ENCODE measurements at regions of chr12 and their contacts with region 1.

Region 1: GRCh38 chr12:118377884-118378470 is 1.6 kb downstream of the SUDS3 start:
- DNase-seq: peak; percentile 86
- ATAC-seq: peak; percentile 5
- H3K4me3 ChIP-seq: peak overlapping the region; percentile 84
- H3K27ac ChIP-seq: no peak overlapping the region
- H3K4me1 ChIP-seq: peaks cover 21% of the 10 kb centered on the region
- H3K27me3 ChIP-seq: no peaks in the 10 kb centered on the region
- CTCF ChIP-seq: peak; percentile 98

Region 2: DNA sequence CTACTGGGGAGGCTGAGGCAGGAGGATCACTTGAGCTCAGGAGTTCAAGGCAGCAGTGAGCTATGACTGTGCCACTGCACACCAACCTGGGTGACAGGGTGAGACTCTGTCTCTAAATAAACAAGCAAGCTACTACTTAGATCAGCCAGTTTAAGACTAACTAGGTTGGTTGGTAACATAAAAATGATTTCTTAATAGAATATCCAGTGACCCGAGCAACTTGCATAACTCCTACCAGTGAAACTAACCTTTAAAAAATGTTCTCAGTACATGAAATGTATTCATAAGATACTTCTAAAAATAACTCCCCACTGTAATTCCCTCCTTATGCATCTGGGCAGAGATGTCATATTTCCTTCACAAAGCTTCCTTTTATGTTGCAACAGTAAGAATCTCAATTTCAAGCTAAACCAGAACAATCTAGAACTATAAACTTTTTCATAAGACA is 21.1 kb before region 1 on chr12:
- CTCF ChIA-PET with region 1: interaction called, 11 read pairs
- POLR2A ChIA-PET with region 1: no interaction called
- intact Hi-C with region 1: no loop called
- DNase-seq: peak; percentile 54
- ATAC-seq: no peak
- H3K4me3 ChIP-seq: no peak overlapping the region
- H3K27ac ChIP-seq: peak overlapping the region; percentile 31
- H3K4me1 ChIP-seq: peaks cover 43% of the 10 kb centered on the region
- H3K27me3 ChIP-seq: no peaks in the 10 kb centered on the region
- CTCF ChIP-seq: no peak

Region 3: GRCh38 chr12:118553856-118554504 is 176.0 kb after region 1 on chr12:
- CTCF ChIA-PET with region 1: interaction called, 10 read pairs
- POLR2A ChIA-PET with region 1: no interaction called
- intact Hi-C with region 1: no loop called
- DNase-seq: no peak
- ATAC-seq: no peak
- H3K4me3 ChIP-seq: no peak overlapping the region
- H3K27ac ChIP-seq: no peak overlapping the region
- H3K4me1 ChIP-seq: no peaks in the 10 kb centered on the region
- H3K27me3 ChIP-seq: peaks cover 32% of the 10 kb centered on the region
- CTCF ChIP-seq: no peak